CD4-positive, alpha-beta T cell (primary cell): ENCODE measurements at regions of chr16 and their contacts with region 1.

Region 1: GRCh38 chr16:11639925-11640899 is 28.0 kb upstream of the SNN start:
- DNase-seq: peak in 3 of 14 experiments; percentile 43 to 78 (median 68)
- ATAC-seq: no peak
- H3K4me3 ChIP-seq: no peak overlapping the region
- H3K4me3 Mint-ChIP-seq: no peak overlapping the region
- H3K27ac ChIP-seq: no peak overlapping the region
- H3K27ac Mint-ChIP-seq: no peak overlapping the region
- H3K4me1 ChIP-seq: peaks cover 22% of the 10 kb centered on the region
- H3K4me1 Mint-ChIP-seq: peaks cover 14% of the 10 kb centered on the region
- H3K27me3 ChIP-seq: peaks cover 0 to 2% of the 10 kb centered on the region in 2 experiments
- H3K27me3 Mint-ChIP-seq: no peaks in the 10 kb centered on the region
- CTCF ChIP-seq: no peak

Region 2: GRCh38 chr16:10964039-10964890 is 675.9 kb before region 1 on chr16:
- CTCF ChIA-PET with region 1: no interaction called
- POLR2A ChIA-PET with region 1: no interaction called
- intact Hi-C with region 1: loop called (anchors 5 kb)
- DNase-seq: peak; percentile 65 to 91 (median 78)
- ATAC-seq: peak; percentile 49
- H3K4me3 ChIP-seq: peak overlapping the region; percentile 9
- H3K4me3 Mint-ChIP-seq: peak overlapping the region; percentile 38
- H3K27ac ChIP-seq: no peak overlapping the region
- H3K27ac Mint-ChIP-seq: peak overlapping the region; percentile 76
- H3K4me1 ChIP-seq: peaks cover 28% of the 10 kb centered on the region
- H3K4me1 Mint-ChIP-seq: peaks cover 30% of the 10 kb centered on the region
- H3K27me3 ChIP-seq: no peaks in the 10 kb centered on the region
- H3K27me3 Mint-ChIP-seq: no peaks in the 10 kb centered on the region
- CTCF ChIP-seq: peak; percentile 99

Region 3: DNA sequence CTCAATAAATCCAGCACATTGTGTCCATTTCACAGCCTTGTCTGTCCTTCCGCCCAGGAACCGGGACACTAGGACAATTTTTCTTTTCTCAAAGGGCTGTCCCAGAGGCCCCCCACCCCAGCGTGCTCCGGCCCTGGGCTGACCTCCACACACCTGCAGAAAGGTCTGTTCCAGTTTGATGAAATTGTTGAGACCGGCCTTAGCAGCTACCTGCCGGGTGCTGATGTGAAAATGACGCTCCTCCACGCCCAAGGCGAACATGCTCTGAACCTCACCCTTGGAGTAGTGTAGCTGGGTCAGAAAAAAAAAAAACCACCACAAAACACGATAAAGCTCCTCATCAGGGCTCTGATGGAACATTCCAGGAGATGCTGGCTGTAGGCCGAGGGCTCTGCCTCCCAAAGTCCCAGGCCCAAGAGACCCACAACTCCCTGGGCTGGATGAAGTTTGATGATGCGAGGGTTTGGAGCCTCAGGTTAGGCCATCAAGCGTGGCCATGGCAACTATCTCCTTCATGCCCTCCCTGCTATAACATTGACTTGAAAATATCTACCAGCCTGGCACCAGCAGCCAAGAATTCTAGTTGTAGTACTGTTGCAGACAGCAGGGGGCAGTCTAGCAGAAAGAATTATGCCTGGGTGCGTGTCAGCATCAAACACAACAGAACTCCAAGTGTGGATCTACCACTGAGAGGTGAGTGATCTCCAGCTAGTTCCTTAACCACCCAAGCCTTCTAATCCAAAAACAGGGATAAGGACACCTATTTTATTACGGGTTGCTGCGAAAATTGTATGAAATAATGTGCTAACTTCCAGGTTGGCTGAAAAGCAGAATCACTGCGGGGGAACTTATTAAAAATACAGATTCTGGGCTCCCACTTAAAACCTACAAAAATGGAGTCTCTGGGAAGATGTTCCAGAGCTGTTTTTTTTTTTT is 232.9 kb before region 1 on chr16:
- CTCF ChIA-PET with region 1: no interaction called
- POLR2A ChIA-PET with region 1: interaction called, 3 read pairs
- intact Hi-C with region 1: loop called in 1 of 2 experiments (anchors 10 kb)
- DNase-seq: peak; percentile 40 to 81 (median 54)
- ATAC-seq: peak; percentile 78
- H3K4me3 ChIP-seq: no peak overlapping the region
- H3K4me3 Mint-ChIP-seq: no peak overlapping the region
- H3K27ac ChIP-seq: no peak overlapping the region
- H3K27ac Mint-ChIP-seq: no peak overlapping the region
- H3K4me1 ChIP-seq: no peaks in the 10 kb centered on the region
- H3K4me1 Mint-ChIP-seq: no peaks in the 10 kb centered on the region
- H3K27me3 ChIP-seq: no peaks in the 10 kb centered on the region
- H3K27me3 Mint-ChIP-seq: no peaks in the 10 kb centered on the region
- CTCF ChIP-seq: peak; percentile 69

Region 4: GRCh38 chr16:11535471-11535870 is 104.7 kb before region 1 on chr16:
- CTCF ChIA-PET with region 1: interaction called, 35 read pairs
- POLR2A ChIA-PET with region 1: interaction called, 5 read pairs
- intact Hi-C with region 1: loop called (anchors 1 kb)
- DNase-seq: no peak
- ATAC-seq: no peak
- H3K4me3 ChIP-seq: no peak overlapping the region
- H3K4me3 Mint-ChIP-seq: no peak overlapping the region
- H3K27ac ChIP-seq: no peak overlapping the region
- H3K27ac Mint-ChIP-seq: no peak overlapping the region
- H3K4me1 ChIP-seq: peaks cover 5% of the 10 kb centered on the region
- H3K4me1 Mint-ChIP-seq: peaks cover 16% of the 10 kb centered on the region
- H3K27me3 ChIP-seq: no peaks in the 10 kb centered on the region
- H3K27me3 Mint-ChIP-seq: no peaks in the 10 kb centered on the region
- CTCF ChIP-seq: no peak

Region 5: GRCh38 chr16:11586856-11587642 is 53.2 kb before region 1 on chr16 and contains the start of gene LITAF:
- CTCF ChIA-PET with region 1: interaction called, 3 read pairs
- POLR2A ChIA-PET with region 1: interaction called, 5 read pairs
- intact Hi-C with region 1: loop called (anchors 1 to 5 kb)
- DNase-seq: peak; percentile 22 to 73 (median 52)
- ATAC-seq: peak; percentile 45
- H3K4me3 ChIP-seq: peak within 1 kb of the TSS; percentile 96
- H3K4me3 Mint-ChIP-seq: peak within 1 kb of the TSS; percentile 95
- H3K27ac ChIP-seq: peak within 1 kb of the TSS; percentile 80 to 82
- H3K27ac Mint-ChIP-seq: peak within 1 kb of the TSS; percentile 97
- H3K4me1 ChIP-seq: peaks cover 48% of the 10 kb centered on the region
- H3K4me1 Mint-ChIP-seq: peaks cover 53% of the 10 kb centered on the region
- H3K27me3 ChIP-seq: no peaks in the 10 kb centered on the region
- H3K27me3 Mint-ChIP-seq: no peaks in the 10 kb centered on the region
- CTCF ChIP-seq: no peak
- total RNA-seq, gene LITAF: 226 to 257 TPM

Region 6: GRCh38 chr16:11613381-11614303 is 26.6 kb before region 1 on chr16:
- CTCF ChIA-PET with region 1: no interaction called
- POLR2A ChIA-PET with region 1: no interaction called
- intact Hi-C with region 1: no loop called
- DNase-seq: peak in 3 of 14 experiments; percentile 56 to 61 (median 57)
- ATAC-seq: peak; percentile 26
- H3K4me3 ChIP-seq: no peak overlapping the region
- H3K4me3 Mint-ChIP-seq: no peak overlapping the region
- H3K27ac ChIP-seq: peak overlapping the region in 1 of 2 donors; percentile 6
- H3K27ac Mint-ChIP-seq: peak overlapping the region; percentile 49
- H3K4me1 ChIP-seq: peaks cover 39% of the 10 kb centered on the region
- H3K4me1 Mint-ChIP-seq: peaks cover 35% of the 10 kb centered on the region
- H3K27me3 ChIP-seq: no peaks in the 10 kb centered on the region
- H3K27me3 Mint-ChIP-seq: no peaks in the 10 kb centered on the region
- CTCF ChIP-seq: no peak

Region 7: DNA sequence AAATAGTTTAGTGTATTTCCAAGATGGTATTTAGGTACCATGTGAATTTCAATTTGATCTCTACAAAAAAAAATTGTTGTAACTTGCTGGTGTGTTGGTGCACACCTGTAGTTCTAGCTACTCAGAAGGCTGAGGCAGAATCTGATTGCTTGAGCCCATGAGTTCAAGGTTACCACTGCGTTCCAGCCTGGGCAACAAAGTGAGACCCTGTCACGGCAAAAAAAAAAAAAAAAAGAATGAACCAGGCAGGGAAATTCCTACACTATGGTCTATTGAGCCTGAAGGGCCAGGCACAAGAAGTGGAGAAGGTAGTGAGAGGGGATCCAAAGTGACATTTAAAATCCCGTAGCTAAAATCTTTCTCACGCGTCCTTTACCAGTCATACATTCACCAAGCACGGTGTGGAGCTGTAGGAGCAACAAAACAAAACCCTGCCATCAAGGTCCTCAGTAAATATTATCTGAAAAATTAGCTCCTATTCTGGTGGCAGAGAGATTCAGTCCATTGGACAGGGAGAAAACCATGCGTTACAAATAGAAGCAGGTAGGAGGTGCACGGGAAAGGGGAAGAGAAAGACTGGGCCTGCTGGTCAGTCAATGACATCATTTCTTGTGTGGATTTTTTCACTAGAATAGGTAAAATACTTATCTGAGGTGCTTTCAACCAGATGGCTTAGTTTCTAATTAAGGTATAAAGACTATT is 75.2 kb after region 1 on chr16:
- CTCF ChIA-PET with region 1: no interaction called
- POLR2A ChIA-PET with region 1: no interaction called
- intact Hi-C with region 1: loop called (anchors 2 kb)
- DNase-seq: no peak
- ATAC-seq: no peak
- H3K4me3 ChIP-seq: no peak overlapping the region
- H3K4me3 Mint-ChIP-seq: no peak overlapping the region
- H3K27ac ChIP-seq: no peak overlapping the region
- H3K27ac Mint-ChIP-seq: peak overlapping the region; percentile 36
- H3K4me1 ChIP-seq: no peaks in the 10 kb centered on the region
- H3K4me1 Mint-ChIP-seq: peaks cover 20% of the 10 kb centered on the region
- H3K27me3 ChIP-seq: no peaks in the 10 kb centered on the region
- H3K27me3 Mint-ChIP-seq: no peaks in the 10 kb centered on the region
- CTCF ChIP-seq: no peak